ENCODE measurements at regions of chr19 and their contacts with region 1.

Region 1: DNA sequence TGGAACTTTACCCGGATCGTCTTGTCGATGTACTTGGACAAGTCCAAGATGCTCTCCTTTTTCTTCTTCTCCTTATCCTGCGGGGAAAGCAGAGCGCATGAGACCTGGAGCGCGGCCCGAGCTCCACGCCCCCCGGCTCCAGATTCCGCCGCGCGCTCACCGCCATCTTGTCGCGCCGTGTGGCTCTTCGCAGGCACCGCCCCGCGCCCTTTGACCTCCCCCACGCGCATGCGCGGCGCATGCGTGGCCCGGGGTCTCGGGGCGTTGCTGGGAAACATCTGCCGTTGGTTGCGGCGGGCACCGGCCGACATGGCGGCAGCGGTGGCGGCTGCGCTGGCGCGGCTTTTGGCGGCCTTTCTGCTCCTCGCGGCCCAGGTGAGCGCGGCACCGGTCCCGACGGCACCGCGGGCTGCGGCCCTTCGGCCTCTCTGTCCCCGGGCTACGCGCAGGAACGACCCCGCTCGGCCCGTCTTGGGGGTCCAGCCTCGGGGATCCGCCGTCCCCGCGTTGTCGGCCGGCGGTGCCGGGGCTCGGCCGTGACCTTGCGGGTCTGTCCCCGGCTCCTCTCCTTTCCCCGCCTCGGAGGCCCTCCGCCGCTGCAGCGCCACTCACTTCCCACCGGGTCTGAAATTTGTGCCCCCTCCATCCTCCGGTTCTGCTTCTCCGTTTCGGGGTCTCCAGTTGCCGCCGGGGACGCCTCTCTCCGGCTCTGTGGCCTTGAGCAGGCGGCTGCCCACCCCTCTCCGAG is at the starts of genes LSM7 and SPPL2B:
- DNase-seq: peak; percentile 54 to 80
- H3K4me3 ChIP-seq: peak within 1 kb of the TSS; percentile 86
- H3K27ac ChIP-seq: peak within 1 kb of the TSS; percentile 50
- H3K4me1 ChIP-seq: peaks cover 6% of the 10 kb centered on the region; the same call in 1 of the 2 replicates
- H3K27me3 ChIP-seq: no peaks in the 10 kb centered on the region
- CTCF ChIP-seq: no peak
- total RNA-seq, gene LSM7: 80.2 and 83.4 TPM in 2 replicates
- total RNA-seq, gene SPPL2B: 49.6 and 64.1 TPM in 2 replicates

Region 2: GRCh38 chr19:2315818-2316353 is 12.7 kb before region 1 on chr19:
- CTCF ChIA-PET with region 1: no interaction called
- POLR2A ChIA-PET with region 1: no interaction called
- intact Hi-C with region 1: no loop called
- DNase-seq: peak in 1 of 2 experiments; percentile 52
- H3K4me3 ChIP-seq: no peak overlapping the region
- H3K27ac ChIP-seq: no peak overlapping the region
- H3K4me1 ChIP-seq: no peaks in the 10 kb centered on the region
- H3K27me3 ChIP-seq: no peaks in the 10 kb centered on the region
- CTCF ChIP-seq: peak; percentile 62

Region 3: DNA sequence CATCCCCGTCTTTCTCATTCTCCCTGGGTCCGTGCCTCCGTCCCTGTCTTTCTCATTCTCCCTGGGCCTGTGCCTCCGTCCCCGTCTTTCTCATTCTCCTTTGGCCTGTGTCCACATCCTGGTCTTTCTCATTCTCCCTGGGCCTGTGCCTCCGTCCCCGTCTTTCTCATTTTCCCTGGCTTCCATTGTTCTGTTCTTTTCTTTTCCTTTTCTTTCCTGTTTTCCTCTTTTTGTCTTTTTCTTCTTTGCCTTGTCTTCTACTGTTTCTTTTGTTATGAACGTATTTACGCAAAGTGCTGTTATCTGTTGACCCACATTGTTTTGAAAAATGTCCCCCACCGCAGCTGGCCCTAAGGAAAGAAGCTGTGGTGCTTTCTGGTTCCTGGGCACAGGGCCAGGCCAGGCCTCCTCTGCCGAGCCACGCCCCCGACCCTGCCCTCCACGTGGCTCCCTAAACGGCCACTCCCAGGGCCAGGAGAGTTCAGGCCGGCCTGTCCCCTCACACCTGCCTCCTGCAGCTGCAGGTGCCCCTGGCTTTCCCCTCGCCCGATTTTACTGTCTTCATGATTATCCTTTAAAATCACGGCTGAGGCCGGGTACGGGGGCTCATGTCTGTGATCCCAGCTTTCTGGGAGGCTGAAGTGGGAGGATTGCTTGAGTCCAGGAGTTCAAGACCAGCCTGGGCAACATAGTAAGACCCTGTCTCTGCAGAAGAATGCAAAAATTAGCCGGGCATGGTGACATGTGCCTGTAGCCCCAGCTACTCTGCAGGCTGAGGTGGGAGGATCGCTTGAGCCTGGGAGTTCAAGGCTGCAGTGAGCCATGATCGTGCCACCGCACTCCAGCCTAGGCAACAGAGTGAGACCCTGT is 17.5 kb after region 1 on chr19:
- CTCF ChIA-PET with region 1: no interaction called
- POLR2A ChIA-PET with region 1: no interaction called
- intact Hi-C with region 1: no loop called
- DNase-seq: peak in 1 of 2 experiments; percentile 35
- H3K4me3 ChIP-seq: no peak overlapping the region
- H3K27ac ChIP-seq: no peak overlapping the region
- H3K4me1 ChIP-seq: no peaks in the 10 kb centered on the region
- H3K27me3 ChIP-seq: no peaks in the 10 kb centered on the region
- CTCF ChIP-seq: no peak

Region 4: GRCh38 chr19:2391118-2391725 is 62.6 kb after region 1 on chr19:
- CTCF ChIA-PET with region 1: no interaction called
- POLR2A ChIA-PET with region 1: no interaction called
- intact Hi-C with region 1: loop called (anchors 5 kb)
- DNase-seq: peak in 1 of 2 experiments; percentile 60
- H3K4me3 ChIP-seq: no peak overlapping the region
- H3K27ac ChIP-seq: no peak overlapping the region
- H3K4me1 ChIP-seq: peaks cover 3% of the 10 kb centered on the region; the same call in 1 of the 2 replicates
- H3K27me3 ChIP-seq: no peaks in the 10 kb centered on the region
- CTCF ChIP-seq: peak; percentile 76

Region 5: DNA sequence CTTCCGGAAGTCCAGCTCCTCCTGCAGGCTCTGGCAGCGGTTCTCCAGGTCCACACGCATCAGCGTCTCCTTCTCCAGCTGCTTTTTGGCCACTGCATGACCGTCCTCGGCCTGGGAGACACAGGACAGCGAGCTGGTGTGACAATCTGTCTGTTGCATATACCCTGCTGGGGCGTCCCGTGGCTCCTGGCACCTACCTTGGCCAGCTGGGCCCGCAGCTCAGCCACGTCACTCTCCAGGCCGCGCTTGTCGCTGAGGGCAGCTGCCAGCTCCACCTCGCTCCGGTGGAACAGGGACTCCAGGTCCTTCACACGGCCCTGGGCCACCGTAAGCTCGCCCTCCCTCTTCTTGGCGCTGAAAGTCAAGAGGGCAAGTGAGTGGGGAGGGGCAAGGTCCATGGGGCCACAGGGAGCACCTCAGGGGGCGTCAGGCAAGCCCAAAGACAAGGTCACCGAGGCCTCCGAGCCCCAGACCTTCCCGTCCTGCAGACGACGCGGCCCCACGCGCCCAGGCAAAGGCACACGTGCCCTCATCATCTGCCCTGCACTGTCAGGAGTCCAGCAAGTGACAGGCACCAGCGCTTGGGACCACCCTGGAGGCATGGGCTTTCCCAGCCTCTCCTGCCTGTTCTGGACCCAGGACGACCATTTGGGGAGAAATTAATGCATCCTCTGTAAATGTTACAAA is 109.7 kb after region 1 on chr19:
- CTCF ChIA-PET with region 1: no interaction called
- POLR2A ChIA-PET with region 1: no interaction called
- intact Hi-C with region 1: no loop called
- DNase-seq: no peak
- H3K4me3 ChIP-seq: no peak overlapping the region
- H3K27ac ChIP-seq: no peak overlapping the region
- H3K4me1 ChIP-seq: no peaks in the 10 kb centered on the region
- H3K27me3 ChIP-seq: no peaks in the 10 kb centered on the region
- CTCF ChIP-seq: no peak

Measured in PC-9 (cell line).